Heart right ventricle (tissue), 16 donors: ENCODE measurements at regions of chr9 and their contacts with region 1.

Region 1: DNA sequence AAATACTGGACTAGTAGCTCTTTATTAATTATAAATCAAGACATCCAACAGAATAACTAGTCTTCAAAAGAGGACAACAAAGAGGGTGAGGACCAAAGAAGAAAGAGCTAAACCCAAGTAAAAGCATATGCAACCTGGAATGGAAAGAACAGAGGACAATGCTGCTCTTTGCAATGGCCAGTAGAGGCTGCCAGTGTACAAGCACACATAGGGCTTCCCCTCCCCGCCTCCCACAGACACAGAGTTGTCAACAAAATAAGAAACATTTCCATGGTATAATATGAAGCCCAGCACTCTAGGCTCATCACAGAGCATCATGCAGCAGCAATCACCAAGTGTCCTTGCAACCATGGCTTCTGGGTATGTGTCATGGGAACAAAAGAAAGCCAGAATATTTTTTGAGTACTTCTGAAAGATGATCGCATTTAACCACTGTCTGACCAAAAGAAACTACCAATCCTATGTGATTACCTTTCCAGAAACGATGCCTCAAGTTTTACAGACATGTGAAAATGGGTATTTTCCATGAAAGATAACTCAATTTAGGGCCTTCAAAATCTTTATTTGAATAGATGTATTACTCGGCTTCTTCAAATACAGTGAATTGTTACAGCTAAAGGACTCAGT is 58.1 kb downstream of the RFX3 start:
- DNase-seq: peak; percentile 14 to 62
- ATAC-seq: peak; percentile 78 to 94 (median 89)
- H3K4me3 ChIP-seq: no peak overlapping the region
- H3K27ac ChIP-seq: no peak overlapping the region
- H3K4me1 ChIP-seq: peaks cover 0 to 35% (median 21%) of the 10 kb centered on the region in 9 donors
- H3K27me3 ChIP-seq: no peaks in the 10 kb centered on the region
- CTCF ChIP-seq: peak; percentile 57 to 92 (median 80)

Region 2: DNA sequence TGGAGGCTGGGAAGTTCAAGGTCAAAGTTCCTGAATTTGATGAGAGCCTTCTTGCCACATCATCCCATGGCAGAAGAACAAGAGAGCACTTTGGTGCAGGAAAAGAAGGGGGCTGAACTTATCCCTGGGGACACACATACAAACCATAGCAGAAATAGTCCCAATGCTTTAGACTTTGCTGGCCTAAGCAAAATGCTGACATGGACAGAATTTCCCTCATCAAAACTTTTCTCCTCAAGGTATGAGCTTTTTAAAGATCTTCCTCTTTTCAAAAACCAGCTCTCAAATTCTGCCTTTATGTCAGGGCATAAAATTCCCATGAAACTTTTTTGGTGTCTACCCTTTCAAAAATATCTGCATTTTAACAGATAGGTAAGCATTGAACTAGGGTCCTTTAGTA is 1794.4 kb before region 1 on chr9:
- intact Hi-C with region 1: loop called in 1 of 10 experiments (anchors 5 kb)
- DNase-seq: no peak
- ATAC-seq: no peak
- H3K4me3 ChIP-seq: no peak overlapping the region
- H3K27ac ChIP-seq: no peak overlapping the region
- H3K4me1 ChIP-seq: no peaks in the 10 kb centered on the region
- H3K27me3 ChIP-seq: no peaks in the 10 kb centered on the region
- CTCF ChIP-seq: no peak

Region 3: GRCh38 chr9:3436629-3437420 is 30.9 kb before region 1 on chr9:
- intact Hi-C with region 1: no loop called
- DNase-seq: no peak
- ATAC-seq: no peak
- H3K4me3 ChIP-seq: no peak overlapping the region
- H3K27ac ChIP-seq: no peak overlapping the region
- H3K4me1 ChIP-seq: peaks cover 0 to 10% (median 4%) of the 10 kb centered on the region in 9 donors
- H3K27me3 ChIP-seq: no peaks in the 10 kb centered on the region
- CTCF ChIP-seq: no peak

Region 4: GRCh38 chr9:3498691-3499090 is 31.0 kb after region 1 on chr9:
- intact Hi-C with region 1: no loop called
- DNase-seq: no peak
- ATAC-seq: no peak
- H3K4me3 ChIP-seq: no peak overlapping the region
- H3K27ac ChIP-seq: no peak overlapping the region
- H3K4me1 ChIP-seq: peaks cover 0 to 33% (median 18%) of the 10 kb centered on the region in 9 donors
- H3K27me3 ChIP-seq: no peaks in the 10 kb centered on the region
- CTCF ChIP-seq: no peak

Region 5: GRCh38 chr9:3647652-3648051 is 179.9 kb after region 1 on chr9:
- intact Hi-C with region 1: loop called in 1 of 10 experiments (anchors 5 kb)
- DNase-seq: no peak
- ATAC-seq: no peak
- H3K4me3 ChIP-seq: no peak overlapping the region
- H3K27ac ChIP-seq: no peak overlapping the region
- H3K4me1 ChIP-seq: no peaks in the 10 kb centered on the region
- H3K27me3 ChIP-seq: no peaks in the 10 kb centered on the region
- CTCF ChIP-seq: peak in 2 of 9 donors; percentile 21 to 28

Region 6: DNA sequence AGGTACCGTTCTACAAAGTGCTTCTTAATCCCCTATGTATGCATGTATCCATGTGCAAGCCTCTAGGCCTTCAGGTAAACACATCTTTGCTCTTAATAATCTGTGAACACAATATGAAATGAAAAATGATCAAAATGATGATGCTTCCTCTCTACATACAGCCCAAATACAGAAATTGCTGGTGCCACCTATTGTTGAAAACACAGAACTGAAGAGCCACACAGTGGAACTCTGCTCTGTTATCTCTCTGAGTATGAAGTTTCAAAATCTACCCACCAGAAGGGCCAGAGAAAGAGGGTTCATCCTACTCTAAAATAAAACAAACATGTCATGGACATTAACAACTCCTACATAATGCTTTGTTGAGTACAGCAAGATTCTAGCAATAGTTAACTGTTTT is 760.9 kb after region 1 on chr9:
- intact Hi-C with region 1: loop called in 1 of 10 experiments (anchors 5 kb)
- DNase-seq: no peak
- ATAC-seq: peak in 4 of 8 donors; percentile 62 to 75 (median 68)
- H3K4me3 ChIP-seq: no peak overlapping the region
- H3K27ac ChIP-seq: no peak overlapping the region
- H3K4me1 ChIP-seq: peaks cover 0 to 22% (median 0%) of the 10 kb centered on the region in 9 donors
- H3K27me3 ChIP-seq: no peaks in the 10 kb centered on the region
- CTCF ChIP-seq: peak; percentile 25 to 73 (median 56)